Left colon (tissue), 2 donors: ENCODE measurements at regions of chr12 and their contacts with region 1.

Region 1: GRCh38 chr12:100200463-100201181 is at the start of gene ACTR6:
- DNase-seq: peak; percentile 96 to 99
- ATAC-seq: peak; percentile 90
- total RNA-seq, gene ACTR6: 20.4 to 24.7 TPM

Region 2: GRCh38 chr12:100142851-100143559 is 57.6 kb before region 1 on chr12 and contains the start of gene BLTP3B:
- intact Hi-C with region 1: loop called in 1 of 2 experiments (anchors 5 kb)
- DNase-seq: peak; percentile 89 to 95
- ATAC-seq: peak; percentile 96
- total RNA-seq, gene BLTP3B: 24.1 to 24.7 TPM

Region 3: GRCh38 chr12:100295764-100296555 is 95.3 kb after region 1 on chr12:
- intact Hi-C with region 1: no loop called
- DNase-seq: no peak
- ATAC-seq: no peak

Region 4: DNA sequence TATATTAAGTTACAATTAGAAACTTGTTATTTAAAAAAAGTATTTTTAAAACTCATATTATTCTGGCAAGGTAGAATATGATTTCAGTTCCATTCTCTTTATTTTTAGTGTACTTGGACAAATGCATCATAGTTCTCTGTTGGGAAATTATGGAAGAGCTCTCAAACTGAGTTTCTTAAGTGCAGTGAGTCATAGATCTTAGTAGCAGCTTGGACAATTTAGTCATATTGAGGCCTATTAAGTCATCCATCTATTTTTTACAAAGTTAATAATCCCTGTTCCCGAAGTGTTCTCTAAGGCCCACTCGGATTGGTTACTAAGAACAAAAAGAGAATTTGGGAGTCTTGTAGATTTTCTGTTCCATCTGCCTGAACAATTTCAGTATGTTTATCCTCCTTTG is 707.9 kb after region 1 on chr12:
- intact Hi-C with region 1: no loop called
- DNase-seq: no peak
- ATAC-seq: no peak